OCI-LY7 (cell line): ENCODE measurements at regions of chr14 and their contacts with region 1.

Region 1: DNA sequence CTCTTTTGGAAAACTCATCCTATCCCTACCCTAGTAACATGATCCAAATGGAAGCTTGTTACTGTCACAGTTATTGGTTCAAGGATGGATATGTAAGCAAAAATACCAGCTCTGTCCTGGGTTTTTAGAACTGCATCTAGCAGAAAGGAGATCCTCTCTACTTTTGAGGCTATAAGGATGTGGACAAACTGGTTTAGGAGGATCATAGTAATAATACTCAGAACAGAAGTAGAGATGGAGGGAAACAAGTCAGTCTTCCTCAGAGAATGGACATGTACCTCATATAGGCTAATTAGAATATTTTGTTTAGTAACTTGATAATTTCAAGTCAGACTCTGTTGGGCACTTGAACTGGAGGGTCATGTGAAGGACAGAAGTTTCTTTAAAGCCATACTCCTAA is 26.6 kb downstream of the FUT8 start:
- DNase-seq: no peak
- H3K4me3 ChIP-seq: no peak overlapping the region
- H3K27ac ChIP-seq: no peak overlapping the region
- H3K4me1 ChIP-seq: peaks cover 21% of the 10 kb centered on the region
- CTCF ChIP-seq: no peak

Region 2: DNA sequence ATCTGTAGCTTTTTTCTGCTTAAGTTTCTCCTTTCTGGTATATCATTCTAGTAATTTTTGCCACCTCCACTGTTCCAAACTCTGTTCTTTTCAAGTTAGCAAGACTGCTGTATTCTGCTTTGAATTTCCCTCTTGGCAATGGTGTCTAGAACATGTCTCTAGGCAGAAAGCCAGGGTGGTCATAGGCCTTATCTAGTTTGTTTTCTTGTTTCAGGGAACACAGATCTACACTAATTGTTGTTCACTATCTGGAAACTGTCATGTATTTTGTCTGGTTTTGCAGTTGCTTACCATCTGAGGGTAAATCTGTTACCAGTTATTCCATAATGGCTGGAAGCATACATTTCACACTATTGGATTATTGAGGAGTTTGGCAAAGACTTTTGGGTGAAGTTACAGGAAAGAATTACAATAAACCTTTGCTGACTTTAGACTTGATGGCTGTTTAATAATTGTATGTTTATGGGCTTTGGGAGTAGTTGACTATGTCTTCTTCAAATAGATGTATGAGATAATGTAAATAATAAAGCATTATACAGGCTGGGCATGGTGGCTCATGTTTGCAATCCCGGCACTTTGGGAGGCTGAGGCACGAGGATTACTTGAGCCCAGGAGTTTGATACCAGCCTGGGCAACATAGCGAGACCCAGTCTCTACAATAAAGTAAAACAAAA is 14.8 kb after region 1 on chr14:
- CTCF ChIA-PET with region 1: interaction called, 3 read pairs
- POLR2A ChIA-PET with region 1: interaction called, 10 read pairs
- intact Hi-C with region 1: no loop called
- DNase-seq: no peak
- H3K4me3 ChIP-seq: no peak overlapping the region
- H3K27ac ChIP-seq: no peak overlapping the region
- H3K4me1 ChIP-seq: no peaks in the 10 kb centered on the region
- CTCF ChIP-seq: no peak

Region 3: GRCh38 chr14:65594153-65594881 is 155.2 kb after region 1 on chr14:
- CTCF ChIA-PET with region 1: no interaction called
- POLR2A ChIA-PET with region 1: no interaction called
- intact Hi-C with region 1: no loop called
- DNase-seq: no peak
- H3K4me3 ChIP-seq: no peak overlapping the region
- H3K27ac ChIP-seq: no peak overlapping the region
- H3K4me1 ChIP-seq: no peaks in the 10 kb centered on the region
- CTCF ChIP-seq: no peak